ENCODE measurements at regions of chr1 and their contacts with region 1.

Region 1: DNA sequence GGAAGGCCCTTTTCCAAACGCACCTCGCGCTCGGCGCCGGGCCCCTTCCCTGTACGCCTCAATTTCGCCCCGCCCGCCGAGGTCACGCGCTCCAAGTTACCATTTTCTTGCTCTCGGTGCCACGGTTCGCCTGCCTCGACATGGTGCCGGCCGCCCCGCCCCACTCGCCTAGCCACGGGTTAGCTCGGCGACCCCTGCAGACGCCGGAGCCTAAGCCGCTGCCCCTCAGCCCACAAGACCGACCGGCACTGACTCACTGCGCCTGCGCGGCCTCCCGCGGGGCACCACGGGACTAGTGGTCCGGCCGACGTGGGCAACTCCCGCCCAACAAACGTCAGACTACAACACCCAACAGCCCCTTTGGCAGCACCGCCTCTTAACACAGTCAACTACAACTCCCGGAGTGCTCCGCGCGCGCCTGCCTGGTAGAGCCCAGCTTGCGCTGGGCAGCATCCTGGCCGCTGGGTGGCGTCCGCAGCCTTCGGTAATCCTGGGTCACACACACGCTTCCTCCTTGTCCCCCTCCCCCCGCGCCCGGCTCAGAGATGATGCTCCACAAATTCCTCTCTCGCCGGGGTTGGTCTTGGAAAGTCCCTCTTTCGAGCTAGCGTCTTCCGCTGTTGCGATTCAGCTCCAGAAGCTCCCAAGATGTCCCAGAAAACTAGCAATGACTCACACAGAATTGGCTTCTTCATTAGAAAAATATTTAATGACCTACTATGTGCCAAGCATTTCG is at the start of gene TRAPPC3:
- DNase-seq: peak; percentile 100
- ATAC-seq: peak; percentile 89
- total RNA-seq, gene TRAPPC3: 57.8 TPM

Region 2: DNA sequence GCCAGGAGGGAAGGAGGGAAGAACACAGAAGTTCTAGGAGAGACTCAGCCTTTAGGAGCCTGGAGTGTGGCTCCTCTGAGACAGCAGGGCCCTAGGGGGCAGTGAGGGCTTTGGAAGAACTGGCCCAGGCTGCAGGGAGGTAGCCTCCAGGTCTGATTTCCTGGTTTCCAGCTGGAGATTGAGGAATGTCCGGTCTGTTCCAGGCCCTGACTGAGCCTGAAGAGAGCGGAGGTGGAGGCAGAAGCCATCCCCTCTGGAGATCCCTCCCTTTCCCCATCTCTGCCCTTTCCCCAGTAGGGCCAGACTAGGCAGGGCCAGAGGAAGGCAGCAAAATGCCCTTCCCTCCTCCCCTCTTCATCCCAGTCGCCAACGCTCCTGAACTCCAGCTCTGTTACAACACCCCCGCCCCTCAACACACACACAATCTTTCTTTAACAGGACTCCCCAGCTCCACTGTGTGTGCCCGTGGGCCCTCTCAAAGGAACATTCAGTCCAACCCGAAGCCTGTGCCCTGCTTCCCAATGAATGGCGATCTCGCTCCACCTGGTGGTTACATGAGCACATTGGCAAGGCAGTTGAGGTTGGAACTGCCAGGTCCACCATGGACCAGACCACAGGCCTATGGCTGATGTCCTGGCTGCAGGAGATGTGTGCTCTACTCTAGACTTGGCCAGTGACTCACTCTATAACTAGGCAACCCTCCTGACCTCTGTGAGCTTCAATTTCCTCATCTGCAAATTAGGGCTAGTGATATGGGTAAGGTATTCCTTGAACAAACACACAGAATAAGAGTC is 38.6 kb after region 1 on chr1:
- intact Hi-C with region 1: loop called (anchors 5 kb)
- DNase-seq: peak; percentile 85
- ATAC-seq: peak; percentile 94

Region 3: DNA sequence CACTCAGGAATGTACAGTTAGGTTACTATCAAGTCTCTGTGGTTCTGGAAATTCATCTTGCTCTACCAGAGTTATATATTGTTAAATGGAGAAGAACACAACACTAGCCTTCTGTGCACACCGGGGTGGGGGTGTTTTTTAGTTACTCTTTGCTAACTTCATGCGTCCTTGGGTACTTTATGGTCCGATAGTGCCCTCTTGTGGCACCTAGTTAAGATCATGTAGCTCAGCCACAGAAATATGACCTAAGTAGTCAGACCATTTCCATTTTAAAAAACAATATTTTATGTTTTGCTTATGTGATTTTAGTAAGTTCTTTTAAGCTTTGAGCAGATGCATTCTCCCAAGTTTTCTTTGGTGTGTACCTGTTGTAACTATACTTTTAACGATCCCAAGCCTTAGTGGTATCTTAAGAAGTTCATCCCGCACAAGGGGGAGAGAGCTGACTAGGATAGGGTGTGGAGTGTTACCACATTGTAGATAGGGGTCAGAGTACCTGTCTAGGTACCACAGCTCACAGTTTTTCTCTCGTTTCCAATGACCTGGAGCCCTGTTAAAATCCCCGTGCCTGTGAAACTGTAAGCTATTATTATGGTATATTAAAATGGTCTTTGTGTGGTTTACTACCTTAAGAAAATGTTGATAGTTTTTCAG is 136.2 kb after region 1 on chr1:
- intact Hi-C with region 1: loop called (anchors 5 kb)
- DNase-seq: no peak
- ATAC-seq: peak; percentile 81

Measured in left ventricle myocardium superior (tissue), 1 donor.